CD4-positive, alpha-beta memory T cell (primary cell): ENCODE measurements at regions of chrX and their contacts with region 1.

Region 1: GRCh38 chrX:149512225-149512885 is 7.2 kb upstream of the IDS start:
- DNase-seq: peak; percentile 54 to 66 (median 61)
- H3K4me3 ChIP-seq: no peak overlapping the region
- H3K4me3 Mint-ChIP-seq: no peak overlapping the region
- H3K27ac ChIP-seq: no peak overlapping the region
- H3K27ac Mint-ChIP-seq: peak overlapping the region in 5 of 7 donors; percentile 7 to 72 (median 48)
- H3K4me1 ChIP-seq: peaks cover 19% of the 10 kb centered on the region
- H3K4me1 Mint-ChIP-seq: peaks cover 4 to 11% (median 8%) of the 10 kb centered on the region in 4 donors
- H3K27me3 ChIP-seq: no peaks in the 10 kb centered on the region
- H3K27me3 Mint-ChIP-seq: peaks cover 0 to 2% of the 10 kb centered on the region in 2 donors

Region 2: DNA sequence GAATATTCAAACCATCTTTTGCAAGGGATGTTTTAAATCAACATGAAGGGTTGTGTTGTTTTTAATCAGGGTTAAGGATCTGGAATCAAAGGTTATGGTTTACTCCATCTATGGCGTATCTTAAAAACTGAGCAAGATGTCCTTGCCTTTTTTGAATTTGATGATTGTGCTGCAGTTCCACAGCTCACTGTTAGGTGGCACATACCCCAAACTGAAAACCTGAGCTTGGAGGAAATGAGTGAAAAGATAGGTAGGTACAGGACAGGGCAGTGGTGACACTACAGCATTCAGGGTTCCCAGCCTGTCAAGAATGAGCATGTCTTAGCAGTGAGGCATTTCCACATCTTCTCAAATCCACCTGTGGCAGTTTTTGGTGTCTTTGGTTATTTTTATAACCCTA is 15.3 kb after region 1 on chrX:
- CTCF ChIA-PET with region 1: interaction called, 33 read pairs
- POLR2A ChIA-PET with region 1: interaction called, 35 read pairs
- intact Hi-C with region 1: loop called (anchors 1 kb)
- DNase-seq: peak; percentile 54 to 61 (median 57)
- H3K4me3 ChIP-seq: no peak overlapping the region
- H3K4me3 Mint-ChIP-seq: peak overlapping the region in 3 of 8 donors; percentile 13 to 57 (median 33)
- H3K27ac ChIP-seq: no peak overlapping the region
- H3K27ac Mint-ChIP-seq: peak overlapping the region; percentile 66 to 92 (median 89)
- H3K4me1 ChIP-seq: peaks cover 31% of the 10 kb centered on the region
- H3K4me1 Mint-ChIP-seq: peaks cover 5 to 33% (median 13%) of the 10 kb centered on the region in 4 donors
- H3K27me3 ChIP-seq: no peaks in the 10 kb centered on the region
- H3K27me3 Mint-ChIP-seq: no peaks in the 10 kb centered on the region

Region 3: DNA sequence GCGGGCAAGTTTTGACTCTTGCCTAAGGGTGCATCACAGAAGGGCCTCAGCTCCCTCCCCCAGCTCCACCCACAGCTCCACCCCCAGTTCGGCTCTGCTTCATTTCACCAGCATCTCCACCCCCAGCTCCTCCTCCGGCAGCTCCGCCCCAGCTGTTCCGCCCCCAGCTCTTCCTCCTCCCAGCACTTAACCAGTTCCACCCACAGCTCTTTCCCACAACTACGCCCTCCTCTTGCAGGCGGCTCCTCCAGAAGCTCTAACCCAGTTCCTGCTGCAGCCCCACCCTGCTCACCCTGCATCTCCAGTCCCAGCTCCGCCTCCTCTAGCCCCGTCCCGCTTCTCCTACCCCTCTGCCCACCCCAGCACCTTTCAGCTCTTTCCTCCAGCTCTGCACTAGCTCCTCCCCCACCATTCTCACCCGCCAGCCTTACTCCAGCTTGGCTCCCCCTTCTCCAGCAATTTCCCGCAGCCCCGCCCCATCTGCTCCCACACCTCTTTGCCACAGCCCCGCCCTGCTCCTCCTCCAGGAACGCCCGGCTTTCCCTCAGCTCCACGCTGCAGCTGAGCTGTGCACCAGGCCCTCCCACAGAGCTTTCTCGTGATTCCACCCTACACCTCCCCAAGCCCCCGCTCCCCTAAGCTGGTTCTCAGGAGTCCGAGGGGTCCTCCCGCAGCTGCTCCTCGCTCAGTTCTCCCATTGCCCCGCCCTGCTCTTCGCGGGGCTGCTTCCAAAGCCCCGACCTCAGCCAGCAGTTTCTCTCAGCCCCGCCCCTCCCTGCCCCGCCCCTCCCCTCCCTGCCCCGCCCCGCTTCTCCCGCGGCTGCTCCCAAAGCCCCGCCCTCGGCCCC is 27.2 kb after region 1 on chrX:
- CTCF ChIA-PET with region 1: interaction called, 31 read pairs
- POLR2A ChIA-PET with region 1: interaction called, 22 read pairs
- intact Hi-C with region 1: loop called (anchors 1 kb)
- DNase-seq: peak; percentile 82 to 94 (median 91)
- H3K4me3 ChIP-seq: peak overlapping the region in 1 of 2 donors; percentile 67
- H3K4me3 Mint-ChIP-seq: peak overlapping the region; percentile 88 to 93 (median 90)
- H3K27ac ChIP-seq: peak overlapping the region; percentile 64
- H3K27ac Mint-ChIP-seq: peak overlapping the region; percentile 90 to 99 (median 97)
- H3K4me1 ChIP-seq: peaks cover 11% of the 10 kb centered on the region
- H3K4me1 Mint-ChIP-seq: peaks cover 6 to 16% (median 12%) of the 10 kb centered on the region in 4 donors
- H3K27me3 ChIP-seq: no peaks in the 10 kb centered on the region
- H3K27me3 Mint-ChIP-seq: no peaks in the 10 kb centered on the region

Region 4: GRCh38 chrX:149631234-149632165 is 119.1 kb after region 1 on chrX and contains the start of gene TMEM185A:
- CTCF ChIA-PET with region 1: no interaction called
- POLR2A ChIA-PET with region 1: no interaction called
- intact Hi-C with region 1: loop called (anchors 5 kb)
- DNase-seq: peak; percentile 70 to 78 (median 75)
- H3K4me3 ChIP-seq: peak within 1 kb of the TSS; percentile 57 to 65
- H3K4me3 Mint-ChIP-seq: peak within 1 kb of the TSS; percentile 89 to 95 (median 92)
- H3K27ac ChIP-seq: peak within 1 kb of the TSS; percentile 49
- H3K27ac Mint-ChIP-seq: peak within 1 kb of the TSS; percentile 83 to 95 (median 89)
- H3K4me1 ChIP-seq: peaks cover 37% of the 10 kb centered on the region
- H3K4me1 Mint-ChIP-seq: peaks cover 22 to 46% (median 34%) of the 10 kb centered on the region in 4 donors
- H3K27me3 ChIP-seq: no peaks in the 10 kb centered on the region
- H3K27me3 Mint-ChIP-seq: peaks cover 2 to 4% of the 10 kb centered on the region in 2 donors
- total RNA-seq, gene TMEM185A: 25.6 to 27.6 TPM